Activated CD8-positive, alpha-beta T cell treated with anti-CD3 and anti-CD28 coated beads for 36 hours (primary cell): ENCODE measurements at regions of chr17 and their contacts with region 1.

Region 1: GRCh38 chr17:76623271-76624146 is 20.0 kb downstream of the ST6GALNAC1 start:
- DNase-seq: peak; percentile 83
- ATAC-seq: peak; percentile 98
- H3K4me3 Mint-ChIP-seq: no peak overlapping the region
- H3K27ac Mint-ChIP-seq: no peak overlapping the region
- H3K4me1 Mint-ChIP-seq: peaks cover 7% of the 10 kb centered on the region
- H3K27me3 Mint-ChIP-seq: peaks cover 1% of the 10 kb centered on the region
- CTCF ChIP-seq: peak; percentile 98

Region 2: DNA sequence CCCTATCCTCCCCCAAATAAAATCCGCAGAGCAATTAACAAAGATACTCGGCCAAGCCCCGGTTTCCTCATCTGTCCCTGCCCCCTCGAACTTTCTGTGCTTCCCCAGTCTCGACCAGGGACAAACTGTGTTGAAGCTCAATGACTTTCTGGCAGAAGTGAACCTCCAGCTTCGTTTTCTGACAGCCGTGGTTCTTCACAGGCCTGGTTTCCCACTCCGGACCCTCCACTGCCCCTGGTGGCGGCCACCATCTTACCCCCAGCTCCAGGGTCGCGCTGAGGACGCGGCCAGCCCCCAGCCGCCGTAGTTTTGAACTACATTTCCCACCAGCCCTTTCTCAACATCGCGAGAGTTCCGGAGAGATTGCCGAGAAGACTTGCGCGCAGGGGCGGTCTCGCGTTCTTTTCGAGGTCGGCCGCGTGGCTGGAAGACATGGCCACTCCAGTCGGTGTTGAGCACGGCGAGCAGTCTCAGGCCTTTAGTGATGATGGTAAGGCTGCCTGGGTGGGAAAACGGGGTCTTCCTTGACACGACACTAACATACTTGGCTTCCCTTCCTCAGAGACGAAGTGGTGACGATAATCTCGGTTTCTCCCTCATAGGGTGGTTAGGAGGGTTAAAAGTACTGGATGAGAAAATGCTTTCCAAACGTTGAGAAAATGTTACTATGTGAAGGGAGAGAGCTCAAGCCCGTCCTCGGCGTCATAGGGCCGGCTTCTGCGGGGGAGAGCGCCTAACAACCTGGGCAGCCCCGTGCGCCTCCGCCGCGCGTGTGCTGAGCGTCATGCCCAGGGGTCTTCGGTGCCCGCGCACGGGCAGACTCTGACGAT is 65.9 kb before region 1 on chr17:
- CTCF ChIA-PET with region 1: interaction called, 64 read pairs
- POLR2A ChIA-PET with region 1: interaction called, 12 read pairs
- intact Hi-C with region 1: no loop called
- DNase-seq: peak; percentile 97
- ATAC-seq: peak; percentile 94
- H3K4me3 Mint-ChIP-seq: peak overlapping the region; percentile 99
- H3K27ac Mint-ChIP-seq: peak overlapping the region; percentile 98
- H3K4me1 Mint-ChIP-seq: peaks cover 46% of the 10 kb centered on the region
- H3K27me3 Mint-ChIP-seq: no peaks in the 10 kb centered on the region
- CTCF ChIP-seq: peak; percentile 60

Region 3: DNA sequence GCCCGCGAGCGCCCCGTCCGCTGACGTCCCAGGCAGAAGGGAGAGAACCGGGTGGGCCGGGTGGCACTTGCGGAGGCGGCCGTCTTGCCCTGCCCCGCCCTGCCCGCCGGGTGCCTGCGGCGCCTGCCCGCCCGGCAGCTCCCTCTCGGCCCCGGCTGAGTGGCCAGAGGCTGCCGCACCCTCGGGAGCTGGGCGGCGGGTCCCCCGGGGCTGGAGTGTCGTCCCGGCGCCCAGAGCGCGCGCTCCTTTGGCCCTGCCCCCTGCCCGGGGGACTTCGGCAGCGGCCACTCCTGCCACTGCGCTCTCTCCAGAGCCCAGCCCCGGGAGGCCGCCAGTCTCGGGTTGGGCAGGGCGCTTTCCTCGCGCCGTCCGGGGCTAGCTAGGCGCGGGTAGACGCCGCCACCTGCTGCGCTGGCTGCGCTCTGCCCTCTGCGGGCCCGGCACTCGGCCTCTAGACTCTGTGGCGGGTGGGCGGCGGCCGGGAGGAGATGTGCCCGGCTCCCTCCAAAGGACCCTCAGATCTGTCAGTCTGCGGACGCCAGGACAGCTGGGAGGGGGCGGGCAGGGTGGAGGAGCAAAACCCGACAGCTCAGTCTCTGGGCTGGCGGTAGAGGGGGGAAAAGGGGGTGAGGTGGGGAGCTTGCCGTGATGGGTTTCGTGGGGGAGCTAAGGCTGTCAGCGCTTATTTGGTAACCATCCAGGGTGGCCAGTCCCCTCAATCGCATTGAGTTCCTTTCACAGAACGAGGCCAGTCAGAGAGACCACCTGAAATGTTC is 37.5 kb before region 1 on chr17 and contains the start of gene ST6GALNAC2:
- CTCF ChIA-PET with region 1: interaction called, 15 read pairs
- POLR2A ChIA-PET with region 1: no interaction called
- intact Hi-C with region 1: no loop called
- DNase-seq: peak; percentile 50
- ATAC-seq: peak; percentile 89
- H3K4me3 Mint-ChIP-seq: peak within 1 kb of the TSS; percentile 53
- H3K27ac Mint-ChIP-seq: no peak within 1 kb of the TSS
- H3K4me1 Mint-ChIP-seq: peaks cover 10% of the 10 kb centered on the region
- H3K27me3 Mint-ChIP-seq: peaks cover 47% of the 10 kb centered on the region
- CTCF ChIP-seq: no peak
- total RNA-seq, gene ST6GALNAC2: not detected

Region 4: GRCh38 chr17:76612977-76613851 is 10.3 kb before region 1 on chr17:
- CTCF ChIA-PET with region 1: interaction called, 46 read pairs
- POLR2A ChIA-PET with region 1: interaction called, 3 read pairs
- intact Hi-C with region 1: no loop called
- DNase-seq: no peak
- ATAC-seq: no peak
- H3K4me3 Mint-ChIP-seq: no peak overlapping the region
- H3K27ac Mint-ChIP-seq: no peak overlapping the region
- H3K4me1 Mint-ChIP-seq: peaks cover 5% of the 10 kb centered on the region
- H3K27me3 Mint-ChIP-seq: no peaks in the 10 kb centered on the region
- CTCF ChIP-seq: no peak

Region 5: GRCh38 chr17:76643553-76644148 is 20.1 kb after region 1 on chr17 and contains the start of gene ST6GALNAC1:
- CTCF ChIA-PET with region 1: interaction called, 18 read pairs
- POLR2A ChIA-PET with region 1: no interaction called
- intact Hi-C with region 1: no loop called
- DNase-seq: no peak
- ATAC-seq: no peak
- H3K4me3 Mint-ChIP-seq: no peak within 1 kb of the TSS
- H3K27ac Mint-ChIP-seq: no peak within 1 kb of the TSS
- H3K4me1 Mint-ChIP-seq: peaks cover 10% of the 10 kb centered on the region
- H3K27me3 Mint-ChIP-seq: no peaks in the 10 kb centered on the region
- CTCF ChIP-seq: no peak
- total RNA-seq, gene ST6GALNAC1: not detected

Region 6: GRCh38 chr17:76681222-76682137 is 58.0 kb after region 1 on chr17:
- CTCF ChIA-PET with region 1: interaction called, 31 read pairs
- POLR2A ChIA-PET with region 1: no interaction called
- intact Hi-C with region 1: no loop called
- DNase-seq: peak; percentile 87
- ATAC-seq: peak; percentile 80
- H3K4me3 Mint-ChIP-seq: no peak overlapping the region
- H3K27ac Mint-ChIP-seq: no peak overlapping the region
- H3K4me1 Mint-ChIP-seq: peaks cover 5% of the 10 kb centered on the region
- H3K27me3 Mint-ChIP-seq: no peaks in the 10 kb centered on the region
- CTCF ChIP-seq: peak; percentile 81